ENCODE measurements at regions of chr5 and their contacts with region 1.

Region 1: GRCh38 chr5:102782311-102782770 is 27.2 kb downstream of the PAM start:
- DNase-seq: no peak
- ATAC-seq: peak in 2 of 4 donors; percentile 43 to 70
- H3K4me3 ChIP-seq: peak overlapping the region; percentile 23
- H3K27ac ChIP-seq: peak overlapping the region; percentile 65
- H3K4me1 ChIP-seq: peaks cover 53% of the 10 kb centered on the region
- H3K27me3 ChIP-seq: no peaks in the 10 kb centered on the region
- CTCF ChIP-seq: no peak

Region 2: DNA sequence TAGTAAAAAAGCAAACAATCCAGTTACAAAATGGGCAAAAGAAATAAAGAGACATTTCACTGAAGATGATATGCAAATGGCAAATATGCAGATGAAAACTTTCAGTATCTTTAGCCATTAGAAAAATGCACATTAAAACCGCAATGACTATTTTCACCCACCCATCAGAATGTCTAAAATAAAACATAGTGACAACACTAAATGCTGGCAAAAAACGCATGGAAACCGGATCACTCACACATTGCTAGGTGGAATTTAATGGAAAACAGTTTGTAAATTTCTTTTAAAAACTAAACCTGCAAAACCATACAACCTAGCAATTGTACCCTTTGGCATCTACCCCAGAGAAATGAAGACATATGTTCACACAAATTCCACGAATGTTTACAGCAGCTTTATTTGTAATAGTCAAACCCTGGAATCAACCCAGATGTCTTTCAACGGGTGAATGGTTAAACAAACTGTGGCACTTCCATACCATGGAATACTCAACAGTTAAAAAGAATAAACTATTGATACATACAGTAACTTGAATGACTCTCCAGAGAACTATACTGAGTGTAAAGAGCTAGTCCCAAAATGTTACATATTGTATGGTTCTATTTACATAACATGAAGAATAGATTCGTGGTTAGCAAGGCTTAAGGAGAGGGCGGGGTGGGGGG is 44.4 kb before region 1 on chr5:
- intact Hi-C with region 1: no loop called
- DNase-seq: no peak
- ATAC-seq: no peak
- H3K4me3 ChIP-seq: no peak overlapping the region
- H3K27ac ChIP-seq: no peak overlapping the region
- H3K4me1 ChIP-seq: no peaks in the 10 kb centered on the region
- H3K27me3 ChIP-seq: no peaks in the 10 kb centered on the region
- CTCF ChIP-seq: no peak

Region 3: GRCh38 chr5:102754767-102755431 is 27.4 kb before region 1 on chr5 and contains the start of gene PAM:
- intact Hi-C with region 1: no loop called
- DNase-seq: peak; percentile 82 to 90
- ATAC-seq: peak; percentile 87 to 91 (median 88)
- H3K4me3 ChIP-seq: peak within 1 kb of the TSS; percentile 94
- H3K27ac ChIP-seq: peak within 1 kb of the TSS; percentile 97
- H3K4me1 ChIP-seq: peaks cover 31% of the 10 kb centered on the region
- H3K27me3 ChIP-seq: no peaks in the 10 kb centered on the region
- CTCF ChIP-seq: no peak
- total RNA-seq, gene PAM: 99.1 to 279 (median 191) TPM

Region 4: GRCh38 chr5:102796009-102796408 is 13.7 kb after region 1 on chr5:
- intact Hi-C with region 1: loop called (anchors 2 kb)
- DNase-seq: no peak
- ATAC-seq: peak; percentile 66 to 83 (median 70)
- H3K4me3 ChIP-seq: peak overlapping the region; percentile 52
- H3K27ac ChIP-seq: peak overlapping the region; percentile 91
- H3K4me1 ChIP-seq: peaks cover 61% of the 10 kb centered on the region
- H3K27me3 ChIP-seq: no peaks in the 10 kb centered on the region
- CTCF ChIP-seq: no peak

Region 5: GRCh38 chr5:102971697-102972293 is 189.5 kb after region 1 on chr5:
- intact Hi-C with region 1: loop called (anchors 5 to 10 kb)
- DNase-seq: no peak
- ATAC-seq: peak in 3 of 4 donors; percentile 61 to 70 (median 61)
- H3K4me3 ChIP-seq: no peak overlapping the region
- H3K27ac ChIP-seq: no peak overlapping the region
- H3K4me1 ChIP-seq: peaks cover 13% of the 10 kb centered on the region
- H3K27me3 ChIP-seq: no peaks in the 10 kb centered on the region
- CTCF ChIP-seq: peak; percentile 46

Measured in psoas muscle (tissue), 8 donors.